Sigmoid colon (tissue), 7 donors: ENCODE measurements at regions of chr16 and their contacts with region 1.

Region 1: GRCh38 chr16:75519881-75520280 is 16.0 kb downstream of the CHST5 start:
- DNase-seq: no peak
- H3K4me3 ChIP-seq: no peak overlapping the region
- H3K27ac ChIP-seq: no peak overlapping the region
- H3K4me1 ChIP-seq: peaks cover 0 to 11% (median 9%) of the 10 kb centered on the region in 4 donors
- H3K27me3 ChIP-seq: no peaks in the 10 kb centered on the region
- CTCF ChIP-seq: no peak
- EP300 ChIP-seq: no peak
- POLR2A ChIP-seq: no peak

Region 2: DNA sequence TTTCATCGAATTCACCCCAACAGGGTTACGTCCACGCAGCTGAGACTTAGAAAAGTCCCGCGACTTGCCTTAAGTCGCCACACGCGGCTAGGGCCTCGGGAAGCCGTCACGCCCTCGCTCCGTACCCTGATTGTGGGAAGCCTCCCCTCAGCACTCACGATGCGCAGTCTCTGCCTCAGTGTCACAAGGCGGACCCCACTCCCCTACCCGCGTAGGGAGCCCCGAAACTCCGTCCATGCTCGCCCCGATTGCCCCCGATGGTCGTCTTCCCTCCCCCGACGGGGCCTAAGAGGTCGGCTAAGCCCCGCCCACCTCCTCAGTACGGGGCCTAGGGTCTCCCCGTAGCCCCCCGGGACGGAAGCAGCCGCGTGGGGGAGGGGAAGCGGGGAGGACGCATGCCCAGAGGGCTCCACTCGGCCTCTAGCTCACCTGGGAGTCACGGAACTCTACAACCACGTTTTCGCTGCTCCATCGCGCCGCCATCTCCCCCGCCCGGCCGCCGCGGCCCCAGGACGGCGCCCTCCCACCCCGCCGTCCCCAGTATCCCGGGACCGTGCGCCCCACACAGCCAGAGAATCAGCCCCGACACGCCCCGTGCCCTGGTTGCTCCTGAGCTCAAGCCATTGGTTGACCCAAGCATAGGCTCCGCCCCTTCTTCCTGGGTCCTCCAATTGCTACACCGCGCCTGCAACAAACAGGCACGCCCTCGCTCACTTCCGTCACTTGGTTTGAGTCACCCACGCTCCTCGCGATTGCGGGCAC is 535.2 kb before region 1 on chr16 and contains the start of gene WDR59:
- intact Hi-C with region 1: no loop called
- DNase-seq: peak; percentile 100
- H3K4me3 ChIP-seq: peak within 1 kb of the TSS; percentile 69 to 99 (median 84)
- H3K27ac ChIP-seq: peak within 1 kb of the TSS; percentile 76 to 88 (median 80)
- H3K4me1 ChIP-seq: peaks cover 0 to 23% (median 16%) of the 10 kb centered on the region in 4 donors
- H3K27me3 ChIP-seq: no peaks in the 10 kb centered on the region
- CTCF ChIP-seq: no peak
- EP300 ChIP-seq: no peak
- POLR2A ChIP-seq: peak in 1 of 2 donors; percentile 34
- total RNA-seq, gene WDR59: 15.1 to 40.7 (median 24.6) TPM

Region 3: GRCh38 chr16:75464130-75464918 is 55.6 kb before region 1 on chr16 and contains the start of gene TMEM170A:
- intact Hi-C with region 1: loop called (anchors 2 kb)
- DNase-seq: peak; percentile 100
- H3K4me3 ChIP-seq: peak within 1 kb of the TSS; percentile 86 to 93 (median 88)
- H3K27ac ChIP-seq: peak within 1 kb of the TSS; percentile 96 to 99 (median 97)
- H3K4me1 ChIP-seq: peaks cover 0 to 20% (median 14%) of the 10 kb centered on the region in 4 donors
- H3K27me3 ChIP-seq: no peaks in the 10 kb centered on the region
- CTCF ChIP-seq: peak; percentile 100
- EP300 ChIP-seq: no peak
- POLR2A ChIP-seq: peak; percentile 94
- total RNA-seq, gene TMEM170A: 12.7 to 18.2 (median 15.3) TPM

Region 4: GRCh38 chr16:75471723-75472633 is 47.9 kb before region 1 on chr16:
- intact Hi-C with region 1: loop called (anchors 1 kb)
- DNase-seq: peak; percentile 78
- H3K4me3 ChIP-seq: no peak overlapping the region
- H3K27ac ChIP-seq: no peak overlapping the region
- H3K4me1 ChIP-seq: no peaks in the 10 kb centered on the region
- H3K27me3 ChIP-seq: no peaks in the 10 kb centered on the region
- CTCF ChIP-seq: peak; percentile 63 to 81 (median 72)
- EP300 ChIP-seq: no peak
- POLR2A ChIP-seq: no peak

Region 5: GRCh38 chr16:75555707-75556430 is 36.0 kb after region 1 on chr16 and contains the start of gene TMEM231:
- intact Hi-C with region 1: loop called (anchors 5 kb)
- DNase-seq: peak; percentile 99
- H3K4me3 ChIP-seq: peak within 1 kb of the TSS; percentile 45 to 77 (median 68)
- H3K27ac ChIP-seq: peak within 1 kb of the TSS; percentile 81 to 86 (median 83)
- H3K4me1 ChIP-seq: peaks cover 0 to 12% (median 9%) of the 10 kb centered on the region in 4 donors
- H3K27me3 ChIP-seq: no peaks in the 10 kb centered on the region
- CTCF ChIP-seq: no peak
- EP300 ChIP-seq: no peak
- POLR2A ChIP-seq: no peak
- total RNA-seq, gene TMEM231: 3.5 to 8.8 (median 5.9) TPM

Region 6: DNA sequence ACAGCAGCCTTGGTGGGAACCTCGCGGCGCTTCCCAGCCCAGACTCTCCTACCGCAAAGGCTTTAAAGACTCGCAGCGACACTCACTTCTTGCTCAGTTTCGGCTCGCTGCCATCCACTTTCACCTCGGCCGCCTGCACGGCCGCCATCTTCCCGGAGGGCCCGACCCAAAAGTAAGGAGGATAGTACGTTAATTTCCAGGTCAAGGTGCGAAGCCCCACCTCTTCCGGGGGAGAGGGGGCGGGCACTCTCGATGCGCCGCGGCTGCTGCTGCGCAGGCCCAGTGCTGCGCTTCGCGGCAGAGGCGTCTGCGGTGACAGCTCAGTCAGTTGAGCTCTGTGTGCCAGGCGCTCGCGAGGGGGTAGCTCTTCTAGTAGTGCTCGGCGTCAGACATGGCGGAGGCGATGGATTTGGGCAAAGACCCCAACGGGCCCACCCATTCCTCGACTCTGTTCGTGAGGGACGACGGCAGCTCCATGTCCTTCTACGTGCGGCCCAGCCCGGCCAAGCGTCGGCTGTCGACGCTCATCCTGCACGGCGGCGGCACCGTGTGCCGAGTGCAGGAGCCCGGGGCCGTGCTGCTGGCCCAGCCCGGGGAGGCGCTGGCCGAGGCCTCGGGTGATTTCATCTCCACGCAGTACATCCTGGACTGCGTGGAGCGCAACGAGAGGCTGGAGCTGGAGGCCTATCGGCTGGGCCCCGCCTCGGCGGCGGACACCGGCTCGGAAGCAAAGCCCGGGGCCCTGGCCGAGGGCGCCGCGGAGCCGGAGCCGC is 127.8 kb after region 1 on chr16 and contains the starts of genes KARS1 and TERF2IP:
- intact Hi-C with region 1: loop called (anchors 2 kb)
- DNase-seq: peak; percentile 96
- H3K4me3 ChIP-seq: peak within 1 kb of the TSS; percentile 92 to 98 (median 94)
- H3K27ac ChIP-seq: peak within 1 kb of the TSS; percentile 96 to 100 (median 97)
- H3K4me1 ChIP-seq: peaks cover 0 to 58% (median 52%) of the 10 kb centered on the region in 4 donors
- H3K27me3 ChIP-seq: no peaks in the 10 kb centered on the region
- CTCF ChIP-seq: no peak
- EP300 ChIP-seq: no peak
- POLR2A ChIP-seq: peak; percentile 95 to 98
- total RNA-seq, gene KARS1: 98.3 to 113 (median 111) TPM
- total RNA-seq, gene TERF2IP: 49.0 to 76.0 (median 65.5) TPM